Caco-2 (cell line): ENCODE measurements at regions of chr2 and their contacts with region 1.

Region 1: DNA sequence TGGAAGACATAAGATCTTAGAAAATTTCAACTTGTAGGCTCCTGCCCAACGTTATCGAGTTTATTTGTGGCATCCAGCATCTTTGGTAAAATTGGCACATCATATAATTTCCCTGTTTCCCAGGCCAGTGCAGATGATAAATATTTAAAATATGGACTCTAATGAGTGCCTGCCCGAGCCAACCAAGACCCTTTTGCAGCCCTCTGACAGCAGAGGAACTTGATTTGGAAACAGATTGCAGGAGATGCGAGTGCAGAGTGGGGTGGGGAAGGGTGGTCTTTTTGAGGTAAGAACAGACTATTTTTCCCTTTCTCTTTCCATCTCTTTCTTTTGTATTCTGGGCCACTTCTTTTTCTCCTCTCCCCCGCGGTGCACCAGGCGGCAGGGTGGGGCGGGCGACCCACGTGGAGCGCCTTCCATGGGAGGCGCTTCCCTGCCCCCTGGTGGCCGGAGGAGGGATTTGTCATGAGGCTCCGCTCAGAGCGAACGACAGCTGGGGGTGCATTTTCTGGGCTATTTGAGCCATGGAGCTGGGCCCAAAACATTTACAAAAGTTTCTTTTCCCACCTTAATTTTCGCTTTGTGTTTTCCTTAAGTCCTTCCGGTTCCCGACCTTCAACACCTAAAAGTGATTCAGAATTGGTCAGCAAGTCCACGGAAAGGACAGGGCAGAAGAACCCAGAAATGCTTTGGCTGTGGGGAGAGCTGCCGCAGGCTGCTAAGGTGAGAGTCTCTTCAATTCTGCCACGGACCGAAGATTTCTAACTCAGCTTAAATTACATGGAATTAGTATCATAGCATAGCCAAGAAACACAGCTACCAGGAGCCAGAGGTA is 32.7 kb downstream of the LPIN1 start:
- DNase-seq: peak; percentile 72 to 86
- H3K4me3 ChIP-seq: no peak overlapping the region
- H3K4me3 Mint-ChIP-seq: peak overlapping the region; percentile 54
- H3K27ac Mint-ChIP-seq: no peak overlapping the region
- H3K4me1 ChIP-seq: peaks cover 15% of the 10 kb centered on the region
- H3K4me1 Mint-ChIP-seq: peaks cover 13% of the 10 kb centered on the region
- H3K27me3 ChIP-seq: no peaks in the 10 kb centered on the region
- H3K27me3 Mint-ChIP-seq: no peaks in the 10 kb centered on the region
- CTCF ChIP-seq: peak; percentile 97 to 99

Region 2: GRCh38 chr2:11738589-11739436 is 40.3 kb before region 1 on chr2:
- CTCF ChIA-PET with region 1: interaction called, 24 read pairs
- POLR2A ChIA-PET with region 1: interaction called, 3 read pairs
- intact Hi-C with region 1: loop called (anchors 1 kb)
- DNase-seq: peak; percentile 67 to 75
- H3K4me3 ChIP-seq: no peak overlapping the region
- H3K4me3 Mint-ChIP-seq: no peak overlapping the region
- H3K27ac Mint-ChIP-seq: peak overlapping the region; percentile 36
- H3K4me1 ChIP-seq: peaks cover 40% of the 10 kb centered on the region
- H3K4me1 Mint-ChIP-seq: peaks cover 30% of the 10 kb centered on the region
- H3K27me3 ChIP-seq: no peaks in the 10 kb centered on the region; the same call in 1 of the 2 replicates
- H3K27me3 Mint-ChIP-seq: no peaks in the 10 kb centered on the region
- CTCF ChIP-seq: peak; percentile 37 to 75

Region 3: DNA sequence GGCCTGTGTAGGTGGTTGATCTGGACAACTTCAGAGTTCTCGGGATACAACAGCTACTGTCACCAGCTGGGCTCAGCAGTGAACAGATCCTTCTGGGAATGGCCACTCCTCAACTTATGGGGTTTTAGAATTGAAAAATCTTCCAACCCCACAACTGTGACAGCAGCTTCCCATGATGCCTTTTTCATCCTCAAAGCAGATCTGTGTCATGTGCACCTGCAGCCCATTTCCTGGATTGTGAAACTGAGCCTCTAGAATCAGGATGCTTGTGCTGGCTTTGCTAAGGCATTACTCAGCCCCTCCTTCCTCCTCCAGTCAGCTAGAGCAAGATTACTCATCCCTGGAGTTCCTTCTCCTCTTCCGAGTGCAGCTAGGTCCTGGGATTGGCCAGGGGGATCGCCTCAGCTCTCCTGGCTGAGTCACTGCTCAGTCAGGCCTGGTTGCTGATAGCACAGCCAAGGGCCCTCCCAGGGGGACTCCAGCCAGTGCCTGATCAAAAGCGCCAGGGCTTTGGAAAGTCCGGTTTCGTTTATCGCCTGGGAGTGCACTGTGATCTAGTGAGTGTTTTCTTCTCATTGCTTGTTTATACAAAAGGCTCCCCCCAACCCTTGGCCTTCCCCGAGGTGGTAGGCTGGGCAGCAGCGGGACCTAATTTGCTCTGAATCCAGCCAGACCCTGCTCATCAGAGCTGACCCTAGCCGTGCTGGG is 35.1 kb before region 1 on chr2:
- CTCF ChIA-PET with region 1: interaction called, 24 read pairs
- POLR2A ChIA-PET with region 1: no interaction called
- intact Hi-C with region 1: loop called (anchors 2 kb)
- DNase-seq: peak; percentile 94 to 97
- H3K4me3 ChIP-seq: no peak overlapping the region
- H3K4me3 Mint-ChIP-seq: peak overlapping the region; percentile 17
- H3K27ac Mint-ChIP-seq: peak overlapping the region; percentile 69
- H3K4me1 ChIP-seq: peaks cover 33% of the 10 kb centered on the region
- H3K4me1 Mint-ChIP-seq: peaks cover 36% of the 10 kb centered on the region
- H3K27me3 ChIP-seq: no peaks in the 10 kb centered on the region
- H3K27me3 Mint-ChIP-seq: no peaks in the 10 kb centered on the region
- CTCF ChIP-seq: no peak